ENCODE measurements at regions of chr20 and their contacts with region 1.

Region 1: DNA sequence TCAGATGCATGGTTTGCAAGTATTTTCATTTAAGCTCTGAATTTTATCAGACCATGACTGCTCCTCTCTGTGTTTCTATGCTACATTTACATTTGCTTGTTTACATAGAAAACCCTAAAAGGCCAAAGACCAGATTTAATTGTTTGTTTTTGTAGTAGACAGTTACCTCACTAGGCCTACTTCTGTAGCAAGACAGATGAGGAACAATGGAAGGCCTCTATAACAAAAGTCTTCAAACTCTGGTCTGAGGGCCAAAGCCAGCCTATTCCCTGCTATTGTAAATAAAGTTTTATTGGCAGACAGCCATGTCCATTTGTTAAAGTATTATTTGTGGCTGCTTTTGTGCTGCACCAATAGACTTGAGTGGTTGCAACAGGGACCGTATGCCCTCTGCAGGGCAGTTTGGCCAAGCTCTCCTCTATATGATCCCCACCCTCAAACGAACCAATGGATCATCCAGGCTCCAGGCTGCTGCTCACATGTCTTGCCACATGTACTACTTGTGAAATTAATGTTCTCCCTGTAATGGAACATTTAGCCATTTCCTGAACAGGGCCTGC is 182.0 kb downstream of the DOK5 start:
- DNase-seq: no peak
- ATAC-seq: no peak
- H3K4me3 ChIP-seq: no peak overlapping the region
- H3K27ac ChIP-seq: no peak overlapping the region
- H3K4me1 ChIP-seq: no peaks in the 10 kb centered on the region
- H3K27me3 ChIP-seq: no peaks in the 10 kb centered on the region
- CTCF ChIP-seq: no peak
- EP300 ChIP-seq: no peak
- POLR2A ChIP-seq: no peak
- RAD21 ChIP-seq: no peak

Region 2: DNA sequence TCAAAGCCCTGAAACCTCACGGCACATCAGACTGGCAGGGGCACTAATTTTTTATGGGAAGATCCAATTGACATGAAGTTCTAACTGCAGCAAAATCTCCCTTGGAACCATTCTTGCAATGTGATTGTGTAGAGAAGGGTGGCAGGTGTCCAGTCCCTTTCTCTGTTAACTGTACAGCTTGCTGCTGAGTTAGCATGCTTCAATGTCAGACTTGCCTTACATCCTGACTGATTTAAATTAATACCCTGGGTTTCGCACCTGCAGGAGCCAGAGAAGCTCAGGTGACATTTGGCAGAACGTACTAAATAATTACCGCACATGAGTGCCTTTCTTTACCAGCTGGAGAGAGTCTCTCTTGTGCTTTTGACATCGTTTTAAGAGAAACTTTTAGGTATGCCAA is 59.0 kb before region 1 on chr20:
- CTCF ChIA-PET with region 1: no interaction called
- POLR2A ChIA-PET with region 1: no interaction called
- RAD21 ChIA-PET with region 1: no interaction called
- SMC1A ChIA-PET with region 1: no interaction called
- in situ Hi-C with region 1: no loop called
- intact Hi-C with region 1: no loop called
- DNase-seq: no peak
- ATAC-seq: no peak
- H3K4me3 ChIP-seq: no peak overlapping the region
- H3K27ac ChIP-seq: no peak overlapping the region
- H3K4me1 ChIP-seq: no peaks in the 10 kb centered on the region
- H3K27me3 ChIP-seq: no peaks in the 10 kb centered on the region
- CTCF ChIP-seq: no peak
- EP300 ChIP-seq: no peak
- POLR2A ChIP-seq: no peak
- RAD21 ChIP-seq: no peak

Region 3: GRCh38 chr20:54668271-54669039 is 11.1 kb after region 1 on chr20:
- CTCF ChIA-PET with region 1: interaction called, 18 read pairs
- POLR2A ChIA-PET with region 1: no interaction called
- RAD21 ChIA-PET with region 1: no interaction called
- SMC1A ChIA-PET with region 1: no interaction called
- in situ Hi-C with region 1: no loop called
- intact Hi-C with region 1: no loop called
- DNase-seq: no peak
- ATAC-seq: peak; percentile 92
- H3K4me3 ChIP-seq: no peak overlapping the region
- H3K27ac ChIP-seq: no peak overlapping the region
- H3K4me1 ChIP-seq: no peaks in the 10 kb centered on the region
- H3K27me3 ChIP-seq: no peaks in the 10 kb centered on the region
- CTCF ChIP-seq: peak; percentile 61 to 75 (median 73)
- EP300 ChIP-seq: no peak
- POLR2A ChIP-seq: no peak
- RAD21 ChIP-seq: peak; percentile 41; the same call in 1 of the 2 replicates

Measured in GM12878 (cell line).